ENCODE measurements at regions of chr1 and their contacts with region 1.

Region 1: DNA sequence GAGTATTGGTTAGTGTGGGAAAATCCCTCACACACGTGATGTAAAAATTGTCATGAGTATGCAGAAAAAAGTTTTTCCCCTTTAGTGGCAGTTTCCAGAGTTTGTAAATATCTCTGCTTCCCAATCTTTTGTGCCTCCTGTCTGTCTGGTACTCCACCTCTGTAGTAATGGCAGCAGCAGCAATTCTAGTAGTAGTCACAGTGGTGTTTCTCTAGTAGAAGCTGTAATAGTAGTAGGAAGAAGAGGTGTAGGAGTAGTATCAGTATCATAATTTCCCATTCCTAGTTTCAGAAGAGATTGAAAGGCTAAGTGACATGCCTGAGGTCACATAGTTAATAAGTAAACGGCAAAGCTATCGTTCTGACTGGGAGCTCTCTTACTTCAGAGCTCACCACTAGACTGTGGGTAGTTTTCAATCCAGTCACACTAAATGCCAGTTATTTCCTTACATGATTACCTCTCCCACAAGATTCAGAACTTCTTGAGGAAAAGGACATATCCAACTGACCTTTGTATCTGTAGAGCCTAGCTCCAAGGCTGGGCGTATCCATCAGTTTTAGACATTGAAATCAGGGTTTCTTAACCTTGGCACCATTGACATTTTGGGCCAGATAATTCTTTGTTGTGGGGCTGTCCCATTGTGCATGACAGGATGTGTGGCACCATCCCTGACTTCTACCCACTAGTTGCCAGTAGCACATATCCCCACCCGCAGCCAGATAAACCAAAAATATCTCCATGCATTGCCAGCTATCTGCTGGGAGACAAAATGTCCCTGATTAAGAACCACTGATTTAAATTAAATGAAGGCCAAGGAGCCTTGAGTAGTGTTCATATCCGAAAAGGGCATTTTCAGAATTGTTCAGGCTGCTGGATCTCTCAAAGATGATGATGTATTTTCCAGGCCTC is 135.9 kb downstream of the FGGY start:
- DNase-seq: no peak
- ATAC-seq: peak in 1 of 4 donors; percentile 11
- H3K4me3 ChIP-seq: no peak overlapping the region
- H3K27ac ChIP-seq: peak overlapping the region; percentile 62
- H3K4me1 ChIP-seq: peaks cover 63% of the 10 kb centered on the region
- H3K27me3 ChIP-seq: no peaks in the 10 kb centered on the region
- CTCF ChIP-seq: no peak

Region 2: DNA sequence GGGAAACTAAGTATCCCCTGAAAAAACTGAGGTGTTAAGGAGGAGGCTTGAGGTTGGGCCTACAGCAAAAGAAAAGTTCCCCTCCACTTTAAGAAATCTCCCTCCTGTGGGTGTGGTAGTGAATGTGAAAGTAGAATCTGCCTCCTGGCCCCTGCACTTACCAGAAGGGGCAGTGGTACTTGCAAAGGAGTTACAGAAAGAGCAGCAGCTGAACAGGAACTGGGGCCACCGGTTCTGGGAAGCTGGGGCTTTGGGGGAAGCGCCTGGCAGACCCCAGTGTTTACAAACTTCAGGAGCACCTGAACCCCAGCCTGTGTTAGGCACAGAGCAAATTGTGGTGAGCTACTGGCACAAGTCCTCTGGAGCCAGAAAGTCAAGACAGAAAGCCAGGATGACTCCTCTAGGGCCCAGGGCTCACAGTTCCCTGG is 386.0 kb before region 1 on chr1:
- intact Hi-C with region 1: no loop called
- DNase-seq: no peak
- ATAC-seq: no peak
- H3K4me3 ChIP-seq: no peak overlapping the region
- H3K27ac ChIP-seq: no peak overlapping the region
- H3K4me1 ChIP-seq: peaks cover 23% of the 10 kb centered on the region
- H3K27me3 ChIP-seq: no peaks in the 10 kb centered on the region
- CTCF ChIP-seq: no peak

Region 3: DNA sequence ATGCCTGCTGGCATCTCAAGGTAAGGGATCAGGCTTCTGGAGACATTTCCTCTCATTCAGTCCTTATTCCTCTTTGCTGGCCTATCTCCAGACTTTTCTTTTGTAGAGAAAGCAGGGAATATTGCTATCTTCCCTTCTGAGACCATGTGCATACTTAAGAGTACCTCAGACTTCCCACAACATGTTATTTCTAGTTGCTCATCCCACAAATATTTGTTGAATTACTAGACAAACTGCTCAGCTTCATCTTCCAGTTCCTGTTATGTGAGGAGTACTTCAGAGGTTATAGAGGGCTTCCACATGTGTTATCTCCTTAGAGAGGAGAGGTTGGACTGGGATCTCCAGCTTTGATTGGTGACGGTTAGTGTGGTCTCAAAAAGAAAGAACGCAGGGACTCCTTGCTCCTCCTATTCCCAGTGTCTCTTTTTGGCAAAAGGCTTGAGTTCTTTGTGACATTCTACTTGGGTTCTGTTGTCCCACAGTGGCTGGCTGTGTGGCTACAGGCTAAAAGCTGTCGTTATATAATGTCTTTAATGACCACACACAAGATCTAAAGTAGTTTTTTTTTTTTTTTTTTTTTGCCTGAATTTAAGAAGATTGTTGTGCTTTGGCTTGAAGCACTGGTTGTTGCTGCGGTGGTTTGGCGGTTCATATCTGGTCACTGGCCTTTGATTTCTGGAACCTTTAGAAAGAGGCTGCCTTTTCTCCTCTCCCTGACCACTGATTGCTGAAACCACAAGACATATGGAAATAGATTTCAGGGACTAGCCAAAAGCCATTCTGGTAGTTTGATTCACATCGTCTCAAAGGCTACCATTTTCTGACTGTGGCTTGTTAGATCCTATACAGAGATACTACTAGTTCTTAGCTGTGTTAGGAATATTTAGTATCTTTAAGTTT is 57.2 kb before region 1 on chr1:
- intact Hi-C with region 1: no loop called
- DNase-seq: no peak
- ATAC-seq: peak; percentile 32 to 46 (median 38)
- H3K4me3 ChIP-seq: no peak overlapping the region
- H3K27ac ChIP-seq: peak overlapping the region; percentile 53
- H3K4me1 ChIP-seq: no peaks in the 10 kb centered on the region
- H3K27me3 ChIP-seq: no peaks in the 10 kb centered on the region
- CTCF ChIP-seq: no peak

Region 4: GRCh38 chr1:59477286-59477685 is 44.5 kb after region 1 on chr1:
- intact Hi-C with region 1: loop called in 1 of 2 experiments (anchors 5 kb)
- DNase-seq: no peak
- ATAC-seq: peak in 2 of 4 donors; percentile 18 to 25
- H3K4me3 ChIP-seq: no peak overlapping the region
- H3K27ac ChIP-seq: no peak overlapping the region
- H3K4me1 ChIP-seq: peaks cover 51% of the 10 kb centered on the region
- H3K27me3 ChIP-seq: no peaks in the 10 kb centered on the region
- CTCF ChIP-seq: no peak